Cardiac septum (tissue), 1 donor: ENCODE measurements at regions of chr19 and their contacts with region 1.

Region 1: DNA sequence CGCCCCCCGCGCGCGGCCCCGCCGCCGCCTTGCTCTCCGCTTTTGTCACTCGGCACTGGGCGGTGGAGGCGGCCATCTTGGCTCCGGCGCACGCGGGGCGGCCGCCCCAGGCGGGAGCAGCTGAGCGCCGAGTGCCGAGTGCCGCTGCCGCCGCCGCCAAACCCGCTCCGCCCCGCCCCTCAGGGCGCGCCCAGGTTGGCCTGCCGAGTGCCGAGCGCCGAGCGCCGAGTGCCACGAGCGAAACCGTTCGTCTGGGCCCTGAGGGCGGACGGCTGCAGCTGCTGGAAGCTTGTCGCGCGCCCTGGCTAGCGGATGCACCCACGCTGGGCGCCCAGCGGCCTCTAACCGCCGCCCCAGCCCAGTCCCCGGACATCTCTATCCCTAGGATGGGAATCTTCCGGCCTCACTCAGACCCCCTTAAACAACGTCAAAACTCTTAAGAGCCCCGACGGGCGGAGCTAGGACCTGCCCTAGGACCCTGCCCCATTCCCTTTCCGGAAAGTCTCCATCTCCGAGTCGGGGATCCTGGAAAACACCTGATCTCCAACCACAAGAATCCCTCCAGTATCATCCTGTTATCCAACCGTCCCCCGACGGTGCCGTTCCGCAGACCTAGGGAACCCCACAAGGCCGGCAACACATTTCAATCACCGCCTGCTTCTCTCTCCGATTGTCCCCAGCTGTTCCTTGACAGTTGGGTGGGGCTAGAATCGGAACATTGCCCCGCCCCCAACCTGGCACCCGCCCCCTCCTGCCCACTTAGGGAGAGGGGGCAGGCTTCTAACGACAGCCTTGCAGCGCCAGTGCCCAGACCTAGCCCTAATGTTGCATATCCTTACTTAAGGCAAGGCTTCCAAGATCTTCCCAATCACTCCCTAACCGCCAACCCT is 14.1 kb upstream of the AKAP8L start:
- DNase-seq: peak; percentile 97

Region 2: GRCh38 chr19:15449620-15450527 is 17.0 kb after region 1 on chr19 and contains the start of gene WIZ:
- intact Hi-C with region 1: loop called (anchors 2 kb)
- DNase-seq: peak; percentile 92
- total RNA-seq, gene WIZ: 21.6 TPM

Region 3: GRCh38 chr19:15623711-15624318 is 190.9 kb after region 1 on chr19:
- intact Hi-C with region 1: no loop called
- DNase-seq: no peak